ENCODE measurements at regions of chr6 and their contacts with region 1.

Region 1: GRCh38 chr6:31252625-31253024 is 19.3 kb downstream of the HLA-C start:
- DNase-seq: no peak
- H3K4me3 ChIP-seq: no peak overlapping the region
- H3K27ac ChIP-seq: no peak overlapping the region
- H3K4me1 ChIP-seq: no peaks in the 10 kb centered on the region; a peak in 1 of 7 replicates
- H3K27me3 ChIP-seq: no peaks in the 10 kb centered on the region
- CTCF ChIP-seq: peak in 1 of 3 experiments; percentile 16; a peak in 2 of 4 replicates
- EP300 ChIP-seq: no peak
- POLR2A ChIP-seq: no peak
- RAD21 ChIP-seq: peak in 1 of 2 experiments; percentile 18; a peak in 1 of 4 replicates

Region 2: GRCh38 chr6:31210123-31210522 is 42.5 kb before region 1 on chr6:
- CTCF ChIA-PET with region 1: interaction called, 12 read pairs
- POLR2A ChIA-PET with region 1: no interaction called
- DNase-seq: no peak
- H3K4me3 ChIP-seq: no peak overlapping the region
- H3K27ac ChIP-seq: no peak overlapping the region
- H3K4me1 ChIP-seq: peaks cover 0 to 4% (median 4%) of the 10 kb centered on the region in 4 experiments; a peak in 3 of 7 replicates
- H3K27me3 ChIP-seq: no peaks in the 10 kb centered on the region
- CTCF ChIP-seq: no peak
- EP300 ChIP-seq: no peak
- POLR2A ChIP-seq: no peak
- RAD21 ChIP-seq: no peak

Measured in H1 (cell line).